Esophagus muscularis mucosa (tissue), 4 donors: ENCODE measurements at regions of chr3 and their contacts with region 1.

Region 1: GRCh38 chr3:44529927-44530326 is 25.1 kb upstream of the ZKSCAN7 start:
- DNase-seq: no peak
- H3K4me3 ChIP-seq: no peak overlapping the region
- H3K27ac ChIP-seq: no peak overlapping the region
- H3K4me1 ChIP-seq: no peaks in the 10 kb centered on the region
- H3K27me3 ChIP-seq: peaks cover 0 to 38% (median 0%) of the 10 kb centered on the region in 4 donors
- CTCF ChIP-seq: no peak
- EP300 ChIP-seq: no peak
- POLR2A ChIP-seq: no peak

Region 2: DNA sequence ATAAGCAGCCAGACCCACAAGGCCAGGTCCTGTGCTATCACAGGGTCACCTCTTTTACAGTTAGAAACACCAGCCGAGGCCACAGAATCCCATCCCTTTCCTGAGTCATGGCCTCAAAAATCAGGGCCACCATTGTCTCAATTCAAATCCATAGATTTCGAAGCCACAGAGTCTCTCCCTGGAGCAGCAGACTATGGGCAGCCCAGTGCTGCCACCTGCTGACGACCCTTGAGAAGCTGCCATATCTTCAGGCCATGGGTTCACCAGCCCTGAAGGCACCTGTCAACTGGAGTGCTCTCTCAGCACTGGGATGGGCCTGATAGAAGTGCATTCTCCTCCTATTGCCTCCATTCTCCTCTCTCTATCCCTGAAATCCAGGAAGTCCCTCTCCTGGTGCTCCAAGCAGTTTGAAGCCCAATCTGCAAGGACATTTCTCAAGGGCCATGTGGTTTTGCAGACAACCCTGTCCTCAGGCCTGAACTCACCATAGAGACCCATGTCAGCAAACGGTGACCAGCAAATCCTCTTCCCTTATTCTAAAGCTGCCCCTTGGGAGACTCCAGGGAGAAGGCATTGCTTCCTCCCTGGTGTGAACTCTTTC is 384.0 kb after region 1 on chr3:
- intact Hi-C with region 1: loop called (anchors 2 kb)
- DNase-seq: no peak
- H3K4me3 ChIP-seq: no peak overlapping the region
- H3K27ac ChIP-seq: no peak overlapping the region
- H3K4me1 ChIP-seq: peaks cover 0 to 4% (median 1%) of the 10 kb centered on the region in 4 donors
- H3K27me3 ChIP-seq: peaks cover 0 to 16% (median 0%) of the 10 kb centered on the region in 4 donors
- CTCF ChIP-seq: peak; percentile 61 to 82 (median 64)
- EP300 ChIP-seq: no peak
- POLR2A ChIP-seq: no peak